Activated CD8-positive, alpha-beta T cell treated with anti-CD3 and anti-CD28 coated beads for 36 hours (primary cell): ENCODE measurements at regions of chr1 and their contacts with region 1.

Region 1: GRCh38 chr1:23634842-23635651 is 56.6 kb upstream of the RPL11 start:
- DNase-seq: peak; percentile 66
- ATAC-seq: peak; percentile 90
- H3K4me3 Mint-ChIP-seq: peak overlapping the region; percentile 51
- H3K27ac Mint-ChIP-seq: peak overlapping the region; percentile 85
- H3K4me1 Mint-ChIP-seq: peaks cover 28% of the 10 kb centered on the region
- H3K27me3 Mint-ChIP-seq: no peaks in the 10 kb centered on the region
- CTCF ChIP-seq: peak; percentile 84

Region 2: GRCh38 chr1:23081376-23081775 is 553.7 kb before region 1 on chr1:
- CTCF ChIA-PET with region 1: no interaction called
- POLR2A ChIA-PET with region 1: no interaction called
- intact Hi-C with region 1: no loop called
- DNase-seq: no peak
- ATAC-seq: peak; percentile 39
- H3K4me3 Mint-ChIP-seq: no peak overlapping the region
- H3K27ac Mint-ChIP-seq: peak overlapping the region; percentile 13
- H3K4me1 Mint-ChIP-seq: no peaks in the 10 kb centered on the region
- H3K27me3 Mint-ChIP-seq: no peaks in the 10 kb centered on the region
- CTCF ChIP-seq: peak; percentile 18

Region 3: DNA sequence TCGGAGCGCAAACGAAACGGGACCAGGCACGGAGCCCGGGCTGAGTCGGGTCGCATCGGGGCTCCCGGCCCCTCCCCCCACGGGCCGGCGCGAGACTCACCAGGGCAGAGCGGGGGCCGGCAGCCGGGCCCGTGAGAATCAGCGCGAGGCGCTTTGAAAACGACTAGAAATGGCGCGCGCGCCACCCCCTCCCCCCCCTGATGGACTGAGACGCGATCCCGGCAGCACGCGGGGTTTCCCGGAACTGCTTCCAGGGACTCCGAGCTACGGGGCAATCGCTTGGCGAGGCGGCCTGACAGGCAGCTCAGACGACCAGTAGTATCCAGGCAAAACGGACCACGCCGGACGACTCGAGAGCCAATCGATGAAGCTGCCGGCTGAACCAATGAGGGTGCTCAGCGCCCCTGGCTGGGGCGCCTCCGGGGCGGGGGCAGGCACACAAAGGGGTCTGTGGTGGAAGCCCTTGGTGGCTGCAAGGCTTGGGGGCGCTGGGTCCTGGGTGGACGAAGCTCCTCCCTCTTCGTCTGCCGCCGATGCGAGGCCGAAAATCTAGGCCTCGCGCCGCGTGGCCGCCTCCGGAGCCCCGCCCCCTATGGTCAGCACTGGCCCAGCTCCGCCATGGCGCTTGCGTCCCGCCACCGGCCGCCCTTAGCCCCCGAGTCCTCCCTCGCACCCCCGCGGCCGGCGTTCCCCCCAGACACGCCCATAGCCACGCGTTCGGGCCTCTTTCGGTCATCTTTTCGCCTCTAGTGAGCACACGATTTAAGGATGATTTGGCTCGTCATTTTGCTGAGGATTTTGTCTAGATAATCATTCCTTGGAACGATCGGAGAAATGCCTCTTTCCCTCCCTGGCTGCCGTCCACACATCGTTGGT is 290.7 kb before region 1 on chr1 and contains the start of gene HNRNPR:
- CTCF ChIA-PET with region 1: no interaction called
- POLR2A ChIA-PET with region 1: no interaction called
- intact Hi-C with region 1: no loop called
- DNase-seq: peak; percentile 100
- ATAC-seq: peak; percentile 97
- H3K4me3 Mint-ChIP-seq: peak within 1 kb of the TSS; percentile 93
- H3K27ac Mint-ChIP-seq: peak within 1 kb of the TSS; percentile 98
- H3K4me1 Mint-ChIP-seq: peaks cover 37% of the 10 kb centered on the region
- H3K27me3 Mint-ChIP-seq: no peaks in the 10 kb centered on the region
- CTCF ChIP-seq: no peak
- total RNA-seq, gene HNRNPR: 190 to 203 TPM

Region 4: GRCh38 chr1:23422241-23423030 is 212.6 kb before region 1 on chr1:
- CTCF ChIA-PET with region 1: interaction called, 10 read pairs
- POLR2A ChIA-PET with region 1: interaction called, 4 read pairs
- intact Hi-C with region 1: no loop called
- DNase-seq: peak; percentile 77
- ATAC-seq: peak; percentile 79
- H3K4me3 Mint-ChIP-seq: peak overlapping the region; percentile 76
- H3K27ac Mint-ChIP-seq: peak overlapping the region; percentile 78
- H3K4me1 Mint-ChIP-seq: peaks cover 24% of the 10 kb centered on the region
- H3K27me3 Mint-ChIP-seq: peaks cover 8% of the 10 kb centered on the region
- CTCF ChIP-seq: no peak

Region 5: DNA sequence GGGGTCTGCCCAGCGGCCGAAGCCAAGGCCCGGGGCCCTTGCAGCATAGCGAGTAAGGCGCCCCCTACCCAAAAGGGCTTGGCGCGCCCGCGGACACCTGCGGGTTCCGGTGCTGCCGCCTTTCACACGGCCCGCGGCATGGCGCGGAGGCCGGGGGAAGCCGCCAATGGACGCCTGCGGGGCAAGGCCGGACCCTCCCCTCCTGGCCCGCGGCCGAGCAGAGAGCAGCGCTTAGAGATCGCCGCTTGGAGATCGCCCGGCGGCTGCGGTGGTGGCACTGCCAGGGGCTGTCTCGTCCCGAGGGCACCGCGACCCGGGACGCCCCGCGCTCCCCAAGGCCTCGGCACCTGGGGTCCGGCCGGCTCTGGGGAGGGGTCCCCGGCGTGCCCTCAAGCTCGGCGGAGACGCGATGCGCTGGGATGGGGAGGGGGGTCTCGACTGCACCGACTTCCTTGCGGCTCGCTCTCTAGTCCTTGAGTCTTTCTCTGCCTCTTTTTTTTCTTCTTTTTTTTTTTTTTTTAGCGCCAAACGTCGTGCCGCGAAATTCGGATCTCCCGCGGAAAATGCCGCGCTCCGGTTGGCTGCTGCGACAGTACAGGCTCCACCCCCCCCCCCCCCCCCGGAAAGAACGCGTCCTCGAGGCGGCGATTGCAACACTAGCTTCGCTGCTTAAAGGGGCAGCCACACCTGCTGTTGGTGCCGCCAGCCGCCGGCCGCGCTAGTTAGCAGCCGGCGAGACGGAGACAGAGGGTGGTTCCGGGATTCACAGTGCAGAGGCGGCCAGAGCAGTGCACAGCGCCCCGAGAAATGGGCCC is 104.1 kb before region 1 on chr1 and contains the start of gene E2F2:
- CTCF ChIA-PET with region 1: interaction called, 35 read pairs
- POLR2A ChIA-PET with region 1: interaction called, 4 read pairs
- intact Hi-C with region 1: no loop called
- DNase-seq: peak; percentile 89
- ATAC-seq: peak; percentile 75
- H3K4me3 Mint-ChIP-seq: peak within 1 kb of the TSS; percentile 86
- H3K27ac Mint-ChIP-seq: peak within 1 kb of the TSS; percentile 97
- H3K4me1 Mint-ChIP-seq: peaks cover 59% of the 10 kb centered on the region
- H3K27me3 Mint-ChIP-seq: no peaks in the 10 kb centered on the region
- CTCF ChIP-seq: no peak
- total RNA-seq, gene E2F2: 23.7 to 25.3 TPM

Region 6: DNA sequence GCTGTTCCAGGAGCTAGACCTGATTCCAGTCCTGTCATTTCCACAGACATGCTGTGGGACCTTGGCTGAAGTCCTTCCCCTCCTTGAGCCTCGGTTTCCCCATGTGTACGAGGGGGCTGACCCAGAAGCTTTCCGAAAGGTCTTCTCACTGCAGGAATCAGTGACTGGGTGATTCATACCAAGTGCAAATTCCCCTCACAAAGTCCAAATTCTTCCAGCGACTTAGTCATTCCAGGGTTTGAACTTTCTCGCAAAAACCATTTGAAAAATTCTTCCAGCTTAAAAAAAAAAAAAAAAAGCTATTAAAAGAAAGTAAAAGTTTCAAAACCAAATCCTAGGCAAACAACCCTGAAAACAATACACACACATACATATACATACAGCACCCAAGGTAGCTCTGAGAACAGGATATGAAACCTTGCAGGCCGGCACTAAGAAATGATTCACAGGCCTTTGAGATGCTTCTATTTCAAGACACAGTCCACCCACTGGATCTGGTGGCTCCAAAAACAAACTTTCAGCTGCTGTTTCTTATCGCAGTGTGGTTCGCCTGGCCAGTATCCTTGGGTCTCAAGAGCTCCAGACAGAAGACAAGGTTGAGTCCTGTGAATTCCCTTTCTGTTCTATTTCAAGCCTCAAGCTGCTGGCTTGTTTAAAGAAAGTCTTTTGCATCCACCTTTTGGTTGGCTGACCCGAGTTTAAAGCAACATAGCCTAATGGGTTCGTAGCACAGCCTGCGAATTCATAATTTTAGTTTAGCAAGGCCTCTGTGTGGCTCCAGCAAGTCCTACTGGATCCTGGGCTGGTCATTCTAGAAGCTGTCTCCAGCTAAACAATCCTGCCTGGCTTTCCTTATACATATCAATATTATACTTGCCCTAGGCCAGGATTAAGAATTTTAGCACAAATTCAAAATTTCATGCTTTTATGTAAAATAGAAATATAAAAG is 57.7 kb before region 1 on chr1:
- CTCF ChIA-PET with region 1: interaction called, 168 read pairs
- POLR2A ChIA-PET with region 1: interaction called, 4 read pairs
- intact Hi-C with region 1: no loop called
- DNase-seq: peak; percentile 81
- ATAC-seq: peak; percentile 93
- H3K4me3 Mint-ChIP-seq: peak overlapping the region; percentile 40
- H3K27ac Mint-ChIP-seq: peak overlapping the region; percentile 85
- H3K4me1 Mint-ChIP-seq: peaks cover 59% of the 10 kb centered on the region
- H3K27me3 Mint-ChIP-seq: no peaks in the 10 kb centered on the region
- CTCF ChIP-seq: no peak

Region 7: GRCh38 chr1:23619299-23620188 is 15.5 kb before region 1 on chr1:
- CTCF ChIA-PET with region 1: interaction called, 32 read pairs
- POLR2A ChIA-PET with region 1: interaction called, 4 read pairs
- intact Hi-C with region 1: no loop called
- DNase-seq: peak; percentile 91
- ATAC-seq: peak; percentile 72
- H3K4me3 Mint-ChIP-seq: peak overlapping the region; percentile 68
- H3K27ac Mint-ChIP-seq: peak overlapping the region; percentile 82
- H3K4me1 Mint-ChIP-seq: peaks cover 81% of the 10 kb centered on the region
- H3K27me3 Mint-ChIP-seq: no peaks in the 10 kb centered on the region
- CTCF ChIP-seq: no peak

Region 8: DNA sequence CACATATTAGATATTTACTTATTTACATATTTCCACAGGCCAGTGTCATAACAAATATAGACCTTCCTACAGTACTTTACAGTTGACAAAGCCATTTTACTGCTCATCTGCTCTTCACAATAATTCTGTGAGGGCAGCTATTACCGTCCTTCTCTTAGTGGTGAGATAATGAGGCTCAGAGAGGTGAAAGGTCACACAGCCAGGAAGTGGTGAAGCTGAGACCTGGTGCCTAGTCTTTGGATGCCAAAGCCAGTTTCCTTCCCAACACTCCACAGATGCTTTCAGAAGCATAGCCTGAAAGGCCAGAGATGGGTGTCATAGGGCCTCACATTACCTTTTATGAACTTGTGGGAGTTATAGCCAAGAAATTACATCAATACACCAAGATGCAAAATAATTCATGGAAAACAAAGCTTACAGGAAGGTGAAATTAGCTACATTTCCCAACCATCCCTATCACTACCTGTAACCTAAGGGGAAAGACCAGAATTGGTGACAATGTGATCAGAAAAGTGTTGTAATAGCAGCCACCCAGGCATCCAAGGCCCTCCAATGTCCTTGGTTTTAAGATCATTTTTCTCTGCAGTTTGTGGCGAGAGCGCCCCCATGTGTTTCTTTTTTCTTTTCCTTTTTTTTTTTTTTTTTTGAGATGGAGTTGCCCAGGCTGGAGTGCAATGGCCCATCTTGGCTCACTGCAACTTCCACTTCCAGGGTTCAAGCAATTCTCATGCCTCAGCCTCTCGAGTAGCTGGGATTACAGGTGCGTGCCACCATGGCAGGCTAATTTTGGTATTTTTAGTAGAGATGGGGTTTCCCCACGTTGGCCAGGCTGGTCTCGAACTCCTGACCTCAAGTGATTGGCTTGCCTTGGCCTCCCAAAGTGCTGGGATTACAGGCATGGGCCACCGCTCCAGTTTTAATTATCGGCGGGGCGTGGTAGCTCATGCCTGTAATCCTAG is 30.1 kb after region 1 on chr1:
- CTCF ChIA-PET with region 1: interaction called, 15 read pairs
- POLR2A ChIA-PET with region 1: no interaction called
- intact Hi-C with region 1: no loop called
- DNase-seq: peak; percentile 54
- ATAC-seq: peak; percentile 74
- H3K4me3 Mint-ChIP-seq: no peak overlapping the region
- H3K27ac Mint-ChIP-seq: no peak overlapping the region
- H3K4me1 Mint-ChIP-seq: peaks cover 6% of the 10 kb centered on the region
- H3K27me3 Mint-ChIP-seq: no peaks in the 10 kb centered on the region
- CTCF ChIP-seq: peak; percentile 63

Region 9: DNA sequence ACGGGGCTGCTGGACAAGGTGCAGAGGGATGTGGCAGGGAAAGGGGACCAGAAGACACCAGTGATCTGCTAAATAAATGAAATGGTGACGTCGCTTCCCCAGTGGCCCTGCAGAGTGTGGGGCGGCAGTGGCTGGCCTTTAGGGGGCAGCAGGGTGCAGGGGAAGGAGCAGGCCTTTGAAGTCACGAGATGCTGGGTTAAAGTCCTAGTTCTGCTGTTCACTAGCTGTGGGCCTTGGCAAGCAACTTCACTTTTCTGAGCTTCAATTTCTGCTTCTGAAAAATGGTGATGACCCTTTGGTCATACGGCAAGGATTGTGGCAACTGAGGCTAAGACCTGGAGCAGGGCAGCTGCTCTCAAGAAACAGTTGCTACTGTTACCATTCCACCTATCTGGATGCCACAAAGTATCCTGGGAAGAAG is 174.7 kb after region 1 on chr1:
- CTCF ChIA-PET with region 1: no interaction called
- POLR2A ChIA-PET with region 1: no interaction called
- intact Hi-C with region 1: no loop called
- DNase-seq: peak; percentile 88
- ATAC-seq: peak; percentile 96
- H3K4me3 Mint-ChIP-seq: no peak overlapping the region
- H3K27ac Mint-ChIP-seq: no peak overlapping the region
- H3K4me1 Mint-ChIP-seq: peaks cover 9% of the 10 kb centered on the region
- H3K27me3 Mint-ChIP-seq: no peaks in the 10 kb centered on the region
- CTCF ChIP-seq: peak; percentile 79